MCF 10A (cell line): ENCODE measurements at regions of chr1 and their contacts with region 1.

Region 1: DNA sequence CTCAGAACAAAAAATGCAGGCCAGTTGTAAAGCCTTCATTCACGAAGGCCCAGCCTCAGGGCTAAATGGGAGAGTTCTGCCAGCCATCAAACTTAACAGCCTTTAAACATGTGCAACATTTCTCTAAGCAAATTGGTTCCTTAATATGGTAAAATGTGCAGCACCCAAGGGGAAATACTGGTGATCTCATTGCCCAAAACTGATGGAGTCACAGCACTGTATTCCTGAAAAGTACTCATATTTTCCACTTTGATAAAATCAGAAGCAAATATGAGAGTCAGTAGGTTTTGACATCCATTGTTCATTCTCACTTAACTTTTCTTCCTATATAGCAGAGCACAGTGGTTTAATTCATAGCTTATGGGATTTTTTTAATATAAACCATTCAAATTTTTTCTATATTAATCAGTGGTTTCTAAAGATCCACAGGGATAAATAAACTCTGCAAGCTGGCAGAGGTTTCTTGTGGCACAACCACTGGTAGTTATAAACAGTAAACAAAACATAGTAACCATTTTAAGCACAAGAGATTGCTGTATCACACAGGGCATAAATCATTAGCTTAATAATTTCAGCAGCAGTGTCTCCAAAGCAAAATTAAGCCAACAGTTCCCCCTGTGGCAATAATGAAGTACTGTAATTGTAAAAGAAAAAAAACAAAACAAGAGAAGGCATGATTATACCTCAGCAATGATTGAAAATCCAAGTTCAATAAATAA is 106.9 kb upstream of the LYPLAL1 start:
- DNase-seq: peak; percentile 65
- H3K4me3 Mint-ChIP-seq: no peak overlapping the region
- H3K27ac Mint-ChIP-seq: no peak overlapping the region
- H3K4me1 Mint-ChIP-seq: peaks cover 6% of the 10 kb centered on the region
- H3K27me3 Mint-ChIP-seq: no peaks in the 10 kb centered on the region
- CTCF ChIP-seq: peak; percentile 90

Region 2: GRCh38 chr1:218330043-218330623 is 736.7 kb before region 1 on chr1:
- CTCF ChIA-PET with region 1: interaction called, 98 read pairs
- POLR2A ChIA-PET with region 1: interaction called, 5 read pairs
- intact Hi-C with region 1: loop called (anchors 1 kb)
- DNase-seq: peak; percentile 67
- H3K4me3 Mint-ChIP-seq: no peak overlapping the region
- H3K27ac Mint-ChIP-seq: peak overlapping the region; percentile 55
- H3K4me1 Mint-ChIP-seq: no peaks in the 10 kb centered on the region
- H3K27me3 Mint-ChIP-seq: no peaks in the 10 kb centered on the region
- CTCF ChIP-seq: peak; percentile 84

Region 3: GRCh38 chr1:218361298-218362065 is 705.3 kb before region 1 on chr1:
- CTCF ChIA-PET with region 1: interaction called, 13 read pairs
- POLR2A ChIA-PET with region 1: no interaction called
- intact Hi-C with region 1: loop called (anchors 1 kb)
- DNase-seq: peak; percentile 80
- H3K4me3 Mint-ChIP-seq: no peak overlapping the region
- H3K27ac Mint-ChIP-seq: no peak overlapping the region
- H3K4me1 Mint-ChIP-seq: no peaks in the 10 kb centered on the region
- H3K27me3 Mint-ChIP-seq: no peaks in the 10 kb centered on the region
- CTCF ChIP-seq: peak; percentile 68

Region 4: DNA sequence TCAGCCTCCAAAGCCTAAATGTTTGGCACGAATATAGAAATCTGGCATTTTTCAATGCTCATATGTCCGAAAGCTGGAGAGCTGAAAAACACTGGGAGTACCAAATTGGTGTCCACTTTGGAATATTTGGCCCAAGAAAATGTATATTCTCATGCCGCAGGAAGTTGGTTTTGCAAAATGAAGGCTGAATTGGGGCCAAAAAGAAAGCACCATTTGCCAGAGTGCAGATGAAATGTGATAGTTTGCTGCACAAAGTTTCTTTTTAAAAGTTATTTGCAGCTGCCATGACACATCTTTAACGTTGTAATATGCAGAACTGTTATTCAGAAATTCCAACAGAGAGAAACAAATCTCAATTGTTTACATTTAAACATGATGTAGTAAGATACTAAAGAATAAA is 17.3 kb before region 1 on chr1:
- CTCF ChIA-PET with region 1: interaction called, 12 read pairs
- POLR2A ChIA-PET with region 1: interaction called, 4 read pairs
- intact Hi-C with region 1: no loop called
- DNase-seq: no peak
- H3K4me3 Mint-ChIP-seq: no peak overlapping the region
- H3K27ac Mint-ChIP-seq: no peak overlapping the region
- H3K4me1 Mint-ChIP-seq: no peaks in the 10 kb centered on the region
- H3K27me3 Mint-ChIP-seq: no peaks in the 10 kb centered on the region
- CTCF ChIP-seq: no peak

Region 5: GRCh38 chr1:219416594-219417238 is 349.9 kb after region 1 on chr1:
- CTCF ChIA-PET with region 1: no interaction called
- POLR2A ChIA-PET with region 1: no interaction called
- intact Hi-C with region 1: loop called (anchors 10 kb)
- DNase-seq: peak; percentile 85
- H3K4me3 Mint-ChIP-seq: no peak overlapping the region
- H3K27ac Mint-ChIP-seq: no peak overlapping the region
- H3K4me1 Mint-ChIP-seq: no peaks in the 10 kb centered on the region
- H3K27me3 Mint-ChIP-seq: peaks cover 83% of the 10 kb centered on the region
- CTCF ChIP-seq: peak; percentile 92